H1 (cell line): ENCODE measurements at regions of chrX and their contacts with region 1.

Region 1: DNA sequence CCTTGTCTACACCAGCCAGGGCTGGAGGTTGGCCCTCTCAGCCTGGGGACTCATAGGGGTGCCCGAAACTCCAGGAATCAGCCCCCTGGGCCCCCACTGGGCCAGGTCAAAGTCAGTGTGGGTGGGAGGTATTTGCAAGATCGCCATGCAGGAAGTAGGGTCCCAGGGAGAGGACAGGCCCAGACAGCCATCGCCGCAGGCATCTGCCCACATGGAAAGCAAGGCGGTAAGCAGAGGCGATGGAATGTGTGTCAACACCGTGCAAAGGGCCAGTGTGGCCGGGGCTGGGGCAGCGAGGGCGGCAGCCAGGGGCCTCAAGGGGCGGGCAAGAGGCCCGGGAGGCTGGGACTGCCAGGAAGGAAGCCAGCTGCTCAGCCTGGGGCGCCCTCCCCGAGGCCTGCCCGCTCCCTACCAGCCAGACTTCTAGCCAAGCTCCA is 19.3 kb upstream of the DUSP9 start:
- DNase-seq: no peak
- H3K4me3 ChIP-seq: no peak overlapping the region
- H3K27ac ChIP-seq: no peak overlapping the region
- H3K4me1 ChIP-seq: peaks cover 0 to 3% (median 0%) of the 10 kb centered on the region in 4 experiments; a peak in 1 of 7 replicates
- H3K27me3 ChIP-seq: no peaks in the 10 kb centered on the region
- CTCF ChIP-seq: no peak
- EP300 ChIP-seq: no peak
- POLR2A ChIP-seq: no peak
- RAD21 ChIP-seq: no peak

Region 2: GRCh38 chrX:153643431-153644351 is 16.0 kb after region 1 on chrX:
- CTCF ChIA-PET with region 1: interaction called, 30 read pairs
- POLR2A ChIA-PET with region 1: no interaction called
- DNase-seq: no peak
- H3K4me3 ChIP-seq: peak overlapping the region in 3 of 4 experiments; percentile 7 to 57 (median 33); a peak in 4 of 8 replicates
- H3K27ac ChIP-seq: no peak overlapping the region
- H3K4me1 ChIP-seq: peaks cover 0 to 20% (median 9%) of the 10 kb centered on the region in 4 experiments; a peak in 5 of 7 replicates
- H3K27me3 ChIP-seq: peaks cover 65 to 79% (median 78%) of the 10 kb centered on the region in 4 experiments
- CTCF ChIP-seq: peak in 2 of 3 experiments; percentile 15 to 44; a peak in 2 of 4 replicates
- EP300 ChIP-seq: no peak
- POLR2A ChIP-seq: no peak
- RAD21 ChIP-seq: no peak